ENCODE measurements at regions of chr13 and their contacts with region 1.

Region 1: GRCh38 chr13:20721454-20722357 is 18.2 kb downstream of the IL17D start:
- DNase-seq: peak in 1 of 2 experiments; percentile 76
- H3K4me3 ChIP-seq: peak overlapping the region; percentile 38 to 68 (median 64)
- H3K27ac ChIP-seq: no peak overlapping the region
- H3K4me1 ChIP-seq: peaks cover 0 to 3% (median 0%) of the 10 kb centered on the region in 4 experiments; a peak in 3 of 7 replicates
- H3K27me3 ChIP-seq: peaks cover 2 to 29% (median 18%) of the 10 kb centered on the region in 4 experiments; a peak in 6 of 7 replicates
- CTCF ChIP-seq: peak in 1 of 3 experiments; percentile 29; a peak in 1 of 4 replicates
- EP300 ChIP-seq: no peak
- POLR2A ChIP-seq: no peak
- RAD21 ChIP-seq: peak; percentile 44 to 52

Region 2: DNA sequence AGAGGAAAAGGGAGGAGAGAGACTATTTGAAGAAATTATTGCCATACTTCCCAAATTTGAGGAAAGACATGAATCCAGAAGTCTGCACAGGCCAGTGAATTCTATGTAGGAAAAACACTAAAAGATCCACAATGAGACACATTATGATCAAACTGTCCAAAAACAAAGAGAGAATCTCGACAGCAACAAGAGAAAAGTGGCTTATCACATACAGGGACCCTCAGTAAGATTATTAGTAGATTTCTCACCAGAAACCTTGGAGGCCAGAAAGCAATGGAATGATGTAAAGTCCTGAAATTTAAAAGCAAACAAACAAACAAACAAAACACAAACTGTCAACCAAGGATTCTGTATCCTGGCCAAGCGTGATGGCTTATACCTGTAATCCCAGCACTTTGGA is 73.9 kb before region 1 on chr13:
- CTCF ChIA-PET with region 1: no interaction called
- POLR2A ChIA-PET with region 1: no interaction called
- DNase-seq: no peak
- H3K4me3 ChIP-seq: no peak overlapping the region
- H3K27ac ChIP-seq: no peak overlapping the region
- H3K4me1 ChIP-seq: no peaks in the 10 kb centered on the region
- H3K27me3 ChIP-seq: no peaks in the 10 kb centered on the region
- CTCF ChIP-seq: no peak
- EP300 ChIP-seq: no peak
- POLR2A ChIP-seq: no peak
- RAD21 ChIP-seq: no peak

Region 3: GRCh38 chr13:20738616-20739015 is 16.9 kb after region 1 on chr13:
- CTCF ChIA-PET with region 1: interaction called, 18 read pairs
- POLR2A ChIA-PET with region 1: interaction called, 3 read pairs
- DNase-seq: no peak
- H3K4me3 ChIP-seq: no peak overlapping the region
- H3K27ac ChIP-seq: no peak overlapping the region
- H3K4me1 ChIP-seq: no peaks in the 10 kb centered on the region
- H3K27me3 ChIP-seq: no peaks in the 10 kb centered on the region
- CTCF ChIP-seq: no peak
- EP300 ChIP-seq: no peak
- POLR2A ChIP-seq: no peak
- RAD21 ChIP-seq: no peak